ENCODE measurements at regions of chr11 and their contacts with region 1.

Region 1: GRCh38 chr11:7353100-7353499 is 101.4 kb downstream of the SYT9 start:
- DNase-seq: peak; percentile 25 to 54 (median 43)
- H3K4me3 ChIP-seq: no peak overlapping the region
- H3K27ac ChIP-seq: no peak overlapping the region
- H3K4me1 ChIP-seq: peaks cover 0 to 8% (median 1%) of the 10 kb centered on the region in 4 experiments
- H3K27me3 ChIP-seq: no peaks in the 10 kb centered on the region

Region 2: GRCh38 chr11:7292922-7293321 is 60.2 kb before region 1 on chr11:
- CTCF ChIA-PET with region 1: no interaction called
- POLR2A ChIA-PET with region 1: no interaction called
- DNase-seq: peak in 2 of 3 donors; percentile 25 to 51
- H3K4me3 ChIP-seq: no peak overlapping the region
- H3K27ac ChIP-seq: no peak overlapping the region
- H3K4me1 ChIP-seq: no peaks in the 10 kb centered on the region
- H3K27me3 ChIP-seq: peaks cover 0 to 2% (median 0%) of the 10 kb centered on the region in 5 experiments

Region 3: GRCh38 chr11:7657306-7658025 is 304.4 kb after region 1 on chr11:
- CTCF ChIA-PET with region 1: interaction called, 20 read pairs
- POLR2A ChIA-PET with region 1: no interaction called
- DNase-seq: peak; percentile 45 to 70 (median 65)
- H3K4me3 ChIP-seq: no peak overlapping the region
- H3K27ac ChIP-seq: no peak overlapping the region
- H3K4me1 ChIP-seq: no peaks in the 10 kb centered on the region
- H3K27me3 ChIP-seq: peaks cover 0 to 37% (median 10%) of the 10 kb centered on the region in 5 experiments